ENCODE measurements at regions of chr2 and their contacts with region 1.

Region 1: GRCh38 chr2:47323009-47323821 is 79.7 kb upstream of the MSH2 start:
- DNase-seq: peak; percentile 66
- ATAC-seq: peak; percentile 97
- H3K4me3 ChIP-seq: no peak overlapping the region
- H3K27ac ChIP-seq: no peak overlapping the region
- H3K4me1 ChIP-seq: peaks cover 5% of the 10 kb centered on the region
- H3K27me3 ChIP-seq: no peaks in the 10 kb centered on the region
- CTCF ChIP-seq: peak; percentile 98 to 99 (median 98); a peak in 5 of 6 replicates
- EP300 ChIP-seq: no peak
- POLR2A ChIP-seq: no peak
- RAD21 ChIP-seq: peak; percentile 100

Region 2: DNA sequence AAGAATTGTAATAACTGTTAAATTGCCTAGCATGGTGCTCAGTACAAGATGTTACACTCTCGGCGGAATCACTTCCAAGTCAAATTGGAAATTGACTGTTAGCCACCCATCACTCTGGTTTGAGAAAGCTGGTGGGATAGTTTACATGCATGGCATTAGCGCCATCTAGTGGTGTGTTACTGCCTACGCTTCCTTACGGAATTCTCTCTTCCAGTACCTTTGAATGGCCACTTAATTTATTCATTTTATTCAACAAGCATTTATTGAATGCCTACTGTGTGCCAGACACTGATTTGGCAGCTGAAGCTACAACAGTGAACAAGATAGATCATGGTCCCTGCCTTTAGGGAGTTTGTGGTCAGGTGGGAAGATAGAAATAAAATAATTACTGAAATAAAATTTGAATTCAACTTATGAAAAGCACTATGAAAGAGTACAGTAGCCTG is 672.6 kb before region 1 on chr2:
- CTCF ChIA-PET with region 1: interaction called, 3 read pairs
- POLR2A ChIA-PET with region 1: no interaction called
- RAD21 ChIA-PET with region 1: interaction called, 4 read pairs
- SMC1A ChIA-PET with region 1: interaction called, 3 read pairs
- in situ Hi-C with region 1: loop called (anchors 10 kb)
- intact Hi-C with region 1: loop called (anchors 5 kb)
- DNase-seq: peak; percentile 48
- ATAC-seq: peak; percentile 93
- H3K4me3 ChIP-seq: no peak overlapping the region
- H3K27ac ChIP-seq: no peak overlapping the region
- H3K4me1 ChIP-seq: no peaks in the 10 kb centered on the region
- H3K27me3 ChIP-seq: no peaks in the 10 kb centered on the region
- CTCF ChIP-seq: peak; percentile 84 to 94 (median 89)
- EP300 ChIP-seq: no peak
- POLR2A ChIP-seq: no peak
- RAD21 ChIP-seq: peak; percentile 93

Region 3: DNA sequence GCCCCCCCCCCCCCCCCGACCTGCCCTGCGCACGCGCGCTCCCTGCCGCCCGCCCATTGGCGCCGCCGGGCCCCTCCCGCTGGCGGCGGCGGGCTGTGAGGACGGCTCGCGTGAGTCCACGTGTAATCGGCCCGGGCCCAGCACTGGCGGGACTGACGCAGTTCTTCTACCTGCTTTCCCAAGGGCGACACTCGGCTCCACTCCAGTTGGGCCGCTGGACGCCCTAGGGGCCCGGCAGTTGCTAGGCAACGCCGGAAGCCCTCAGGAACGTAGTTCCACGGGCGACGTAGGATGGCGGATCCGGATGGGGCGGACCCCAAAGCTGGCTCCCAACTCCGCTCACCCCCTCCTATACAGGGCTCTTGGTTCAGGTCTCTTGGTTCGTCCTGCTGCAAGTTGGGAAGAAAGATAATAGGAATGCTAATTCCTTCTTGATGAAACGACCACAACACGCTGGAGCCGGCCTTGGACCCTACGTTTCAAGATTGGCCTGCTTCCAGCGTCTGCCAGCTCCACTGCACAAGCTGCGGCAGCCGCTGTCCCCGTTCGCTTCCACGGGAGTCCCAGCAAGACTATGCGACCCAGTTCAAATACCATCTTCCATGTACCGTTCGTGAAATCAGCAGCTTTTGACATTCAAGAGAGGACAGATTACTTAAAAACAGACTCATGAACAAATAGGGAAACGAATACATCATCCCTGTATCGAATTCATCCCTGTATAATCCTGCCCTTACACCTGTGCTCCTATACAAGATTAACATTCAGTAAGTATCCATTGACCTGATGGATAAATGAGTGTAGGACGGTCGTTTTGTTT is 407.2 kb before region 1 on chr2:
- CTCF ChIA-PET with region 1: interaction called, 32 read pairs
- POLR2A ChIA-PET with region 1: no interaction called
- RAD21 ChIA-PET with region 1: interaction called, 17 read pairs
- SMC1A ChIA-PET with region 1: interaction called, 23 read pairs
- in situ Hi-C with region 1: no loop called
- intact Hi-C with region 1: loop called (anchors 1 kb)
- DNase-seq: peak; percentile 40
- ATAC-seq: peak; percentile 87
- H3K4me3 ChIP-seq: peak overlapping the region; percentile 84
- H3K27ac ChIP-seq: peak overlapping the region; percentile 64
- H3K4me1 ChIP-seq: peaks cover 16% of the 10 kb centered on the region
- H3K27me3 ChIP-seq: no peaks in the 10 kb centered on the region
- CTCF ChIP-seq: no peak
- EP300 ChIP-seq: no peak
- POLR2A ChIP-seq: peak; percentile 82
- RAD21 ChIP-seq: no peak

Region 4: DNA sequence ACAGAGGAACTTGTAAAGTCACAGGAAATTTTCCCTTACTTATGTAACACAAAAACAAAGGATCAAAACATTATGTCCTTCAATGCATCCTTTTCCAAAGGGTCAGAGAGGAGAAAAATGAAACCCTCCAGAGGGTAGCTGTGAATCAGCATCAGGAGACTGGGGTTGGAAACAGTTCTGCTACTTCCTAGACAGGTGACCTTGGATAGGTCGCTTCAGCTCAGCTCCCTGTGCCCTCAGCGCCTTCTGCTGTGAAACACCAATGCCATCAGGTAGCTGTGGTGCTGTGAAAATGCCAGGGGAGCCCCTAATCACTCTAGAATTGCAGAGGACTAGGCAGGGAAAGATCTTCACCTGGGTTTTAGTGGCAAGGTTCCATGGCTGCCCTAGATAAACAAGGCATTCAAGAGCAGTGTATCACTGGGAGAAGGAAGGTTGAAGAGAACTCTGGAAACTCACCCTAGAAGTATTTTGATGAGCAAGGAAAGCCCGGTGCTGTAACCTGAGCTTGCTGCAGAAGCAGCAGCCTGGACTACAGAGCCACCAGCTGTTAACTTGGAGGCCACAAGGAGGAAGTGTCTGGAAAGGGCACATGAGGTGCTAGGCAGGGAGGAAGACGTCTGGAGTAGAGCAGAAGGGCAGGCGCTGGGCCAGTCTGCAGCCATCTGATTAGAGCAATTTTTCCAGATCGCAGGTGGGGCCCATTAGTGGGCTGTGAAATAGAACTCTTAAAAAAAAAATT is 306.9 kb before region 1 on chr2:
- CTCF ChIA-PET with region 1: interaction called, 20 read pairs
- POLR2A ChIA-PET with region 1: no interaction called
- RAD21 ChIA-PET with region 1: interaction called, 9 read pairs
- SMC1A ChIA-PET with region 1: interaction called, 3 read pairs
- in situ Hi-C with region 1: no loop called
- intact Hi-C with region 1: no loop called
- DNase-seq: no peak
- ATAC-seq: no peak
- H3K4me3 ChIP-seq: no peak overlapping the region
- H3K27ac ChIP-seq: no peak overlapping the region
- H3K4me1 ChIP-seq: no peaks in the 10 kb centered on the region
- H3K27me3 ChIP-seq: no peaks in the 10 kb centered on the region
- CTCF ChIP-seq: no peak
- EP300 ChIP-seq: no peak
- POLR2A ChIP-seq: no peak
- RAD21 ChIP-seq: no peak

Region 5: GRCh38 chr2:47127862-47128543 is 195.2 kb before region 1 on chr2:
- CTCF ChIA-PET with region 1: interaction called, 13 read pairs
- POLR2A ChIA-PET with region 1: interaction called, 4 read pairs
- RAD21 ChIA-PET with region 1: interaction called, 3 read pairs
- SMC1A ChIA-PET with region 1: interaction called, 10 read pairs
- in situ Hi-C with region 1: no loop called
- intact Hi-C with region 1: no loop called
- DNase-seq: no peak
- ATAC-seq: no peak
- H3K4me3 ChIP-seq: no peak overlapping the region
- H3K27ac ChIP-seq: no peak overlapping the region
- H3K4me1 ChIP-seq: no peaks in the 10 kb centered on the region
- H3K27me3 ChIP-seq: no peaks in the 10 kb centered on the region
- CTCF ChIP-seq: no peak; a peak in 1 of 6 replicates
- EP300 ChIP-seq: no peak
- POLR2A ChIP-seq: no peak
- RAD21 ChIP-seq: peak; percentile 23; the same call in 1 of the 2 replicates

Region 6: GRCh38 chr2:47300609-47301276 is 22.5 kb before region 1 on chr2:
- CTCF ChIA-PET with region 1: interaction called, 16 read pairs
- POLR2A ChIA-PET with region 1: interaction called, 3 read pairs
- RAD21 ChIA-PET with region 1: interaction called, 14 read pairs
- SMC1A ChIA-PET with region 1: interaction called, 26 read pairs
- in situ Hi-C with region 1: no loop called
- intact Hi-C with region 1: no loop called
- DNase-seq: peak; percentile 64
- ATAC-seq: peak; percentile 91
- H3K4me3 ChIP-seq: peak overlapping the region; percentile 52
- H3K27ac ChIP-seq: peak overlapping the region; percentile 65
- H3K4me1 ChIP-seq: peaks cover 29% of the 10 kb centered on the region
- H3K27me3 ChIP-seq: no peaks in the 10 kb centered on the region
- CTCF ChIP-seq: no peak
- EP300 ChIP-seq: peak in 1 of 2 experiments; percentile 11; a peak in 1 of 4 replicates
- POLR2A ChIP-seq: no peak
- RAD21 ChIP-seq: no peak

Region 7: DNA sequence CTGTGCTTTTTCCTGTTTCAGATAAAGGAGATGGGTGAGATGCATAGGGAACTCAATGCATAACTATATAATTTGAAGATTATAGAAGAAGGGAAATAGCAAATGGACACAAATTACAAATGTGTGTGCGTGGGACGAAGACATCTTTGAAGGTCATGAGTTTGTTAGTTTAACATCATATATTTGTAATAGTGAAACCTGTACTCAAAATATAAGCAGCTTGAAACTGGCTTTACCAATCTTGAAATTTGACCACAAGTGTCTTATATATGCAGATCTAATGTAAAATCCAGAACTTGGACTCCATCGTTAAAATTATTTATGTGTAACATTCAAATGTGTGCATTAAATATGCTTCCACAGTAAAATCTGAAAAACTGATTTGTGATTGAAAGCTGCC is 63.3 kb after region 1 on chr2:
- CTCF ChIA-PET with region 1: interaction called, 273 read pairs
- POLR2A ChIA-PET with region 1: no interaction called
- RAD21 ChIA-PET with region 1: interaction called, 17 read pairs
- SMC1A ChIA-PET with region 1: interaction called, 29 read pairs
- in situ Hi-C with region 1: no loop called
- intact Hi-C with region 1: no loop called
- DNase-seq: no peak
- ATAC-seq: peak; percentile 61
- H3K4me3 ChIP-seq: no peak overlapping the region
- H3K27ac ChIP-seq: no peak overlapping the region
- H3K4me1 ChIP-seq: peaks cover 3% of the 10 kb centered on the region; the same call in 1 of the 2 replicates
- H3K27me3 ChIP-seq: peaks cover 0 to 3% of the 10 kb centered on the region in 2 experiments; a peak in 1 of 4 replicates
- CTCF ChIP-seq: no peak
- EP300 ChIP-seq: no peak
- POLR2A ChIP-seq: no peak
- RAD21 ChIP-seq: no peak

Measured in GM12878 (cell line).